Gastrocnemius medialis (tissue), 4 donors: ENCODE measurements at regions of chr19 and their contacts with region 1.

Region 1: DNA sequence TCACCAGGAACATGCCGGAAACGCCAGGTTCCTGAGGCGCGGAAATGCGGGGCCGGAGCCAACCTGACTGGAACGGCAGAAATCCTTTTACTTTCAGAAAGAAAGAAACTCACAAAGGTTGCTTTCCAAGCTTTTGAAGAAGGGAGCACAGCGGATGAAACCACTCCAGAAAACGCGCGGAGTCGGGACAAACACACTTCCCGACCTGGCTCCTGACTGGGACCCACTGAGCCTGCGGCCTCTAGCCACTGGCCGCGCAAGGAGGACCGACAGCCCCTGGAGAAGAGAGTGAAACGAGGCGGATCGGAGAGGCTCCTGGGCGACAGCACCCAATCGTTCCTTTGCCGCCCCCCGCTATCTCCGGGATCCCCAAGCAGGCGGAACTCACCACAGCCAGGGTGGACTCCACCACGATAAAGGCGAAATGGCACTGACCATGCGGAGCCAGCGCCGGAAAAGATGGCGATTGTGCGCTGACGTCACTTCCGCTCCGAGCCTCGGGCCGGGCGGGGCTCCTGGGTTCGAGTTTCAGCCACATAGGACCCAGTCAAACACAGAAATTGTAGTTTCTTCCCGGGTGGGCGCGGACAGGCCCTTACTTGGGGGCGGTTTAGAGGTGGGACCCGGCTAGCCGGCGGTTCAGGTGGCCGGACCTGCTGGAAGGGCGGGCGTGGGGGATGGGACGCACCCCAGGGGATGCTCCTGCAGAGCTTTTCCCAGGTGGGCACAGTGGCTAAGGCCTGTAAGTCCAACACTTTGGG is at the start of gene ZNF121:
- DNase-seq: peak; percentile 59 to 63
- ATAC-seq: peak; percentile 95 to 98
- H3K4me3 ChIP-seq: peak within 1 kb of the TSS; percentile 67 to 93 (median 82)
- H3K27ac ChIP-seq: peak within 1 kb of the TSS; percentile 82 to 93 (median 90)
- H3K4me1 ChIP-seq: peaks cover 8 to 10% of the 10 kb centered on the region in 2 donors
- H3K27me3 ChIP-seq: peaks cover 0 to 11% (median 0%) of the 10 kb centered on the region in 3 donors
- CTCF ChIP-seq: no peak
- POLR2A ChIP-seq: peak; percentile 41 to 49
- total RNA-seq, gene ZNF121: 11.2 to 21.9 (median 14.6) TPM

Region 2: GRCh38 chr19:9140159-9140874 is 443.9 kb before region 1 on chr19 and contains the start of gene ZNF317:
- in situ Hi-C with region 1: loop called in 1 of 4 experiments (anchors 10 kb)
- intact Hi-C with region 1: no loop called
- DNase-seq: peak; percentile 87 to 91
- ATAC-seq: peak; percentile 99
- H3K4me3 ChIP-seq: peak within 1 kb of the TSS; percentile 84 to 88 (median 87)
- H3K27ac ChIP-seq: peak within 1 kb of the TSS; percentile 90 to 93 (median 92)
- H3K4me1 ChIP-seq: peaks cover 16 to 23% of the 10 kb centered on the region in 2 donors
- H3K27me3 ChIP-seq: no peaks in the 10 kb centered on the region
- CTCF ChIP-seq: no peak
- POLR2A ChIP-seq: peak; percentile 28 to 70
- total RNA-seq, gene ZNF317: 9.1 to 15.0 (median 12.2) TPM

Region 3: GRCh38 chr19:9538183-9539058 is 45.8 kb before region 1 on chr19 and contains the start of gene ZNF426:
- in situ Hi-C with region 1: no loop called
- intact Hi-C with region 1: loop called (anchors 5 kb)
- DNase-seq: peak; percentile 51 to 67
- ATAC-seq: peak; percentile 89 to 98
- H3K4me3 ChIP-seq: peak within 1 kb of the TSS; percentile 73 to 83 (median 78)
- H3K27ac ChIP-seq: peak within 1 kb of the TSS; percentile 79 to 91 (median 86)
- H3K4me1 ChIP-seq: peaks cover 0 to 5% of the 10 kb centered on the region in 2 donors
- H3K27me3 ChIP-seq: no peaks in the 10 kb centered on the region
- CTCF ChIP-seq: no peak
- POLR2A ChIP-seq: peak; percentile 11 to 25
- total RNA-seq, gene ZNF426: 3.2 to 4.8 (median 3.8) TPM

Region 4: GRCh38 chr19:9610484-9611113 is 26.3 kb after region 1 on chr19:
- in situ Hi-C with region 1: no loop called
- intact Hi-C with region 1: no loop called
- DNase-seq: no peak
- ATAC-seq: no peak
- H3K4me3 ChIP-seq: peak overlapping the region in 2 of 4 donors; percentile 12 to 15
- H3K27ac ChIP-seq: no peak overlapping the region
- H3K4me1 ChIP-seq: no peaks in the 10 kb centered on the region
- H3K27me3 ChIP-seq: no peaks in the 10 kb centered on the region
- CTCF ChIP-seq: no peak
- POLR2A ChIP-seq: no peak

Region 5: DNA sequence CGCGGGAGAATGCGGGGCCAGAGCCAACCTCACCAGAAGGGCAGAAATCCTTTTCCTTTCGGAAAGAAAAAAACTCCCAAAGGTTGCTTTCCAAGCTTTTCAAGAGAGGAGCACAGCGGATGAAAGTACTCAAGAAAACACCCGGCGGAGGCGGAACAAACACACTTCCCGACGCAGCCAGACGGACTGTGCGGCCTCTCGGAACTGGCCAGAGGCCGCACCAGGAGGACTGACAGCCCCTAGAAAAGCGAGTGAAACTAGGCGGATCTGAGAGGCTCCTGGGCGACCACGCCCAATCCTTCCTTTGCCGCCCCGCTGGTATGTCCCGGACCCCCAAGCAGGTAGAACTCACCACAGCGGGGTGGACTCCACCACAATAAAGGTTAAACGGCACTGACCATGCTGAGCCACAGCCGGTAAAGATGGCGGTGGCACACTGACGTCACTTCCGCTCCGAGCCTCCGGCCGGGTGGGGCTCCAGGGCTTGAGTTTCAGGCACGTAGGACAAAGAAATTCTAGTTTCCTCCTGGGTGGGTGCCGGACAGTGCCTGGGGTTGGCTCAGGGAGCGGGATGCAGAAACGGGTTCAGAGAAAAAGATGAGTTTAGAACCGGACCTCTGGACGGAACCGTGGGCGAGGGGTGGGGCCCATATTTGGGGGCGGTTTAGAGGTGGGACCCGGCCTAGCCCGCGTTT is 90.6 kb after region 1 on chr19 and contains the start of gene ZNF562:
- in situ Hi-C with region 1: no loop called
- intact Hi-C with region 1: loop called (anchors 1 kb)
- DNase-seq: peak; percentile 36 to 57
- ATAC-seq: peak; percentile 84 to 92
- H3K4me3 ChIP-seq: peak within 1 kb of the TSS; percentile 66 to 90 (median 70)
- H3K27ac ChIP-seq: peak within 1 kb of the TSS; percentile 81 to 88 (median 86)
- H3K4me1 ChIP-seq: no peaks in the 10 kb centered on the region
- H3K27me3 ChIP-seq: no peaks in the 10 kb centered on the region
- CTCF ChIP-seq: no peak
- POLR2A ChIP-seq: peak in 1 of 2 donors; percentile 34
- total RNA-seq, gene ZNF562: 3.0 to 8.1 (median 6.6) TPM

Region 6: GRCh38 chr19:9796113-9796773 is 212.0 kb after region 1 on chr19:
- in situ Hi-C with region 1: no loop called
- intact Hi-C with region 1: loop called (anchors 5 kb)
- DNase-seq: peak; percentile 60 to 74
- ATAC-seq: peak; percentile 51 to 69
- H3K4me3 ChIP-seq: no peak overlapping the region
- H3K27ac ChIP-seq: no peak overlapping the region
- H3K4me1 ChIP-seq: peaks cover 0 to 3% of the 10 kb centered on the region in 2 donors
- H3K27me3 ChIP-seq: peaks cover 0 to 15% (median 12%) of the 10 kb centered on the region in 3 donors
- CTCF ChIP-seq: peak; percentile 60 to 77 (median 72)
- POLR2A ChIP-seq: no peak